ENCODE measurements at regions of chr5 and their contacts with region 1.

Region 1: DNA sequence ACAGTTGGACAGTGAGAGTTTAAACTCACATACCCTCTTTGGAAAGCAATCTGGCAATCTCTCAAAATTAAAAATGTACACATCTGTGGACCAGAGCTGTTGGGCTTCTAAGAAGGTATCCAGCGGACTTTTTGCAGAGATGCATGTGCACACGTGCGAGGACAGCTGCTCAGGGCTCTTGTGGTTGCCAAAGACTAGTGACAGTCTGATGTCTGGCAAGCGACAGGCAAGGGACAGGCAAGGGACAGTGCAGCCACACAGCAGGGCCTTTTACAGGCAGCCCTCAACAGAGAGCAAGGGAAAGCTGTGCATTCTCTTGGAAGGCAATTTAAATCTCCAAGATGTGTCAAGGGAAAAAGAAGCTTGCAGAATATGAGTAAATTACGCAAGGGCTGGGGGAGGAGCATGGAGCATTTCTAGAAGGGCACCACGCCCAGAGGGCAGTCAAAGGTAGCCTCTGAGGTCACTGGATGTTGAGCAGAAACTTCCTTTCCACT is 9.3 kb downstream of the GFPT2 start:
- DNase-seq: no peak

Region 2: GRCh38 chr5:180328296-180329137 is 15.4 kb before region 1 on chr5:
- CTCF ChIA-PET with region 1: interaction called, 22 read pairs
- POLR2A ChIA-PET with region 1: no interaction called
- DNase-seq: peak; percentile 92

Measured in HEK293T (cell line).